ENCODE measurements at regions of chr19 and their contacts with region 1.

Region 1: DNA sequence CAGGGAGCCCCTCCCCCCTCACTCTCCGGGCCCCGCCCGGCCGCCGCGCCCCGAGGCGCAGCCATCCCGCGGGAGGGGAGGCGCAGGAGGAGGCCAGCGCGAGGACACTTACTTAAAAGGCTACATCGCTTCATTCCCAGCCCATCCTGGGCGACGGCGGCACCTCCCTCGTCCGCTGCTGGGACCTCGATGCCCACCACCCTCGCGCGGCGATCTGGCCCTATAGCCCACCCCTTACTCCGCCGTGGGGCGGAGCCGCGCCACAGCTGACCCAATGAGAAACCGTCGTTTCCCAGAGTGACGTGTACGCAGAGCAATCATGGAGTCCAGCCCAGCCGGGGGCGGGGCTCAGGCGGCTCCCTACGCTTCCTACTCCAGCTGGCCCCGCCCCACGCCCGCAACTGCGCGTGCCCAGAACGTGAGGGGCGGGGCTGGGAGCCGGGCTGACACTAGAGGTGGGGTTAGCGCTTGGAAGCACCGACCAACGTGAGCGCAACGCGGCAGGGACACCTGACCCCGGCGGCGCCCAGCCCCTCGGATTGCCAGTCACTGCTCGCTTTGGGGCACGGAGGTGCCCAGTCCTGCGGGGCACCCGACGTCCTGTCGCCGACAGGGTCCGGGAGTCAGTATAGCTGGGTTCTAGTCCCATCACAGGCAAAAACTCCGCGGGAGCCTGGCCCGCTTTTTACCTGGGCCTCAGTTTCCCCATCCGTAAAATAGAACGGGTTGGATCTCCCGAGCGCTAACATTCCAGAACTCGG is at the start of gene ANKRD27:
- DNase-seq: peak; percentile 97 to 99 (median 98)
- H3K4me3 ChIP-seq: peak within 1 kb of the TSS; percentile 75 to 81
- H3K4me3 Mint-ChIP-seq: peak within 1 kb of the TSS; percentile 91 to 98 (median 96)
- H3K27ac ChIP-seq: peak within 1 kb of the TSS; percentile 68
- H3K27ac Mint-ChIP-seq: peak within 1 kb of the TSS; percentile 77 to 95 (median 91)
- H3K4me1 ChIP-seq: peaks cover 45% of the 10 kb centered on the region
- H3K4me1 Mint-ChIP-seq: peaks cover 21 to 52% (median 35%) of the 10 kb centered on the region in 4 donors
- H3K27me3 ChIP-seq: no peaks in the 10 kb centered on the region
- H3K27me3 Mint-ChIP-seq: peaks cover 6 to 7% of the 10 kb centered on the region in 2 donors
- total RNA-seq, gene ANKRD27: 49.6 to 51.2 TPM

Region 2: GRCh38 chr19:32580901-32581703 is 94.0 kb before region 1 on chr19 and contains the start of gene PDCD5:
- CTCF ChIA-PET with region 1: no interaction called
- POLR2A ChIA-PET with region 1: interaction called, 14 read pairs
- intact Hi-C with region 1: loop called (anchors 1 kb)
- DNase-seq: peak; percentile 93 to 97 (median 94)
- H3K4me3 ChIP-seq: peak within 1 kb of the TSS; percentile 72 to 88
- H3K4me3 Mint-ChIP-seq: peak within 1 kb of the TSS; percentile 90 to 99 (median 96)
- H3K27ac ChIP-seq: peak within 1 kb of the TSS; percentile 74
- H3K27ac Mint-ChIP-seq: peak within 1 kb of the TSS; percentile 83 to 96 (median 92)
- H3K4me1 ChIP-seq: peaks cover 25% of the 10 kb centered on the region
- H3K4me1 Mint-ChIP-seq: peaks cover 18 to 39% (median 28%) of the 10 kb centered on the region in 4 donors
- H3K27me3 ChIP-seq: no peaks in the 10 kb centered on the region
- H3K27me3 Mint-ChIP-seq: peaks cover under 1% of the 10 kb centered on the region in 2 donors
- total RNA-seq, gene PDCD5: 61.1 to 67.4 TPM

Region 3: GRCh38 chr19:32691291-32691951 is 16.3 kb after region 1 on chr19 and contains the start of gene NUDT19:
- CTCF ChIA-PET with region 1: interaction called, 4 read pairs
- POLR2A ChIA-PET with region 1: interaction called, 73 read pairs
- intact Hi-C with region 1: loop called (anchors 1 kb)
- DNase-seq: peak; percentile 68 to 79 (median 71)
- H3K4me3 ChIP-seq: peak within 1 kb of the TSS; percentile 85 to 89
- H3K4me3 Mint-ChIP-seq: peak within 1 kb of the TSS; percentile 91 to 94 (median 92)
- H3K27ac ChIP-seq: peak within 1 kb of the TSS; percentile 63
- H3K27ac Mint-ChIP-seq: peak within 1 kb of the TSS; percentile 80 to 96 (median 94)
- H3K4me1 ChIP-seq: peaks cover 45% of the 10 kb centered on the region
- H3K4me1 Mint-ChIP-seq: peaks cover 42 to 50% (median 45%) of the 10 kb centered on the region in 4 donors
- H3K27me3 ChIP-seq: no peaks in the 10 kb centered on the region
- H3K27me3 Mint-ChIP-seq: no peaks in the 10 kb centered on the region
- total RNA-seq, gene NUDT19: 10.5 to 10.6 TPM

Region 4: DNA sequence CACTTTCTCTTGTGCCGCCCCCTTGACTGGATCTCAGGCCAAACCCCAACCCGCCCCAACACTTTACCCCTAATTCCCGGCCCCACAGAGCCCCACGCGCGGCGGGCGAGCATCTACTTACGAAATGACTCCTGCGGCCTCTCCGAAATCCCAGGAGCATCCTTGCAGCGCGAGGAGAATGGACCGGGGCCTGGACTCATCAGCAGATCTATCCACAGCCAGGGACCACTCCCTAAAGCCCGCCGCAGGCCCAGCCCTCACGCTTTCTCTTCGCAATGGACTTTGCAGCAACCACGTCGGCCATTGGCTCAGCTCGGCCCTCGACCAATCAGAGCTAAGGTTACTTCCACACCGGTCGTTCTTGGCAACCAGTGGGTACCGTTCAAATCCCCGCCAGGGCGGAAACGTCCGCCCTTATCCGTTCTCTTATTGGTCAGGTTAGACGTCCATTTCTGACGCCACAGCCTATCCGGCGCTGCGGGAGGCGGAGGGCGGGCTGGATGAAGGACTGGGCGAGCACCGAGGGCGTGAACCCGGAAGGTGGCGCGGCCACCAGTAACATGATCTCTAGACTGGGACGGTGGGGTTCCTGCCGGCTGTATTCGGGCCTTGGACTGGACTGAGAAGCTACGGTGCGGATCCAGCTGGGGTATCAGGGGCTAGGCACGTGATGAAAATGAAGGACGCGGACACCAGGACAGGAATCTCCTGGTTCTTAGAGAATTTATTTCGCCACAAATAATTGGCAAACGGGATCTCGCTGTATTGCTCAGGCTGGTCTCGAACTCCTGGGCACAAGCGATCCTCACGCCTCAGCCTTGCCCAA is 296.8 kb after region 1 on chr19 and contains the starts of genes CEP89 and FAAP24:
- CTCF ChIA-PET with region 1: no interaction called
- POLR2A ChIA-PET with region 1: interaction called, 8 read pairs
- intact Hi-C with region 1: loop called (anchors 1 kb)
- DNase-seq: peak; percentile 99
- H3K4me3 ChIP-seq: peak within 1 kb of the TSS; percentile 62 to 79
- H3K4me3 Mint-ChIP-seq: peak within 1 kb of the TSS; percentile 99 to 100 (median 99)
- H3K27ac ChIP-seq: peak within 1 kb of the TSS; percentile 65
- H3K27ac Mint-ChIP-seq: peak within 1 kb of the TSS; percentile 92 to 98 (median 97)
- H3K4me1 ChIP-seq: peaks cover 10% of the 10 kb centered on the region
- H3K4me1 Mint-ChIP-seq: peaks cover 14 to 29% (median 20%) of the 10 kb centered on the region in 4 donors
- H3K27me3 ChIP-seq: no peaks in the 10 kb centered on the region
- H3K27me3 Mint-ChIP-seq: no peaks in the 10 kb centered on the region
- total RNA-seq, gene CEP89: 20.2 to 20.6 TPM
- total RNA-seq, gene FAAP24: 1.3 to 1.8 TPM

Measured in CD4-positive, alpha-beta memory T cell (primary cell).